ENCODE measurements at regions of chr10 and their contacts with region 1.

Region 1: DNA sequence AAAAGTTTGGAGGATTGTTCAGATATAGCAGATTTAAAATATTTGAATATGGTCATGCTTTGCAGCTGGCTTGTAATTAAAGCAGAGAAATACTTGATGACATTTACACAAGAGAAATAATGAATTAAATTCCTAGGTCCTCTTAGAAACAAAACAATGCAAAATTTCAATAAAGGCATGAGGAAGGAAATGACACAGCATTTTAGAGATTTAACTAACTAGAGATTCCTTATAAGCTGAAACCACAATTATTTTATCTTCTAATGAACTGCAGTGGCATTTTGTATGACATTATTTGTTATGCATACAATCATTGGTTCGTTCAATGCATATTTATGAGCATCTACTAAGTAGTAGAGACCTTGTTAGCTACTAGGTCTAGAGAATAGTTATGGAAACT is 490.9 kb downstream of the ZWINT start:
- DNase-seq: no peak
- ATAC-seq: peak; percentile 22
- H3K4me3 ChIP-seq: no peak overlapping the region
- H3K27ac ChIP-seq: no peak overlapping the region
- H3K4me1 ChIP-seq: no peaks in the 10 kb centered on the region
- H3K27me3 ChIP-seq: no peaks in the 10 kb centered on the region
- CTCF ChIP-seq: no peak

Region 2: GRCh38 chr10:55897490-55897921 is 27.3 kb after region 1 on chr10:
- CTCF ChIA-PET with region 1: no interaction called
- POLR2A ChIA-PET with region 1: no interaction called
- intact Hi-C with region 1: loop called (anchors 2 kb)
- DNase-seq: no peak
- ATAC-seq: no peak
- H3K4me3 ChIP-seq: no peak overlapping the region
- H3K27ac ChIP-seq: no peak overlapping the region
- H3K4me1 ChIP-seq: no peaks in the 10 kb centered on the region
- H3K27me3 ChIP-seq: no peaks in the 10 kb centered on the region
- CTCF ChIP-seq: no peak

Region 3: DNA sequence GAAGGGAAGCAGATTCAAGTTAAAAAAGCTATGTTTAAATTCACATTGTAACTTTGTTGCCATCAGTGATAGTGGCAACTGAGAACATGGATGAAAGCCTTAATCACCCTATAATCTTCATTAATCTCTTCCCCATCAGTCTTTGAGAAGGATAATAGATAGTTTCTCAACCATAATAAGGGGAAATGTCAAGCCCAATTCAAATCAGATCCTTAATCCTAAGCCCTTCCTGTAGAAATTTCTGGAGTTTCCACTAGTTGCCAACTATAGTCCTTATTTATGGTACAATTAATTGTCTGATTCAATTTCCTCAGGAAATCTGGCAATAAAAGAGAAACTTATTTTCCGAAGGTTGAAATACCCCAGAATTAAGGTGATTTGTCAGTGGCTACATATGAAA is 59.1 kb after region 1 on chr10:
- CTCF ChIA-PET with region 1: no interaction called
- POLR2A ChIA-PET with region 1: no interaction called
- intact Hi-C with region 1: loop called (anchors 5 kb)
- DNase-seq: no peak
- ATAC-seq: no peak
- H3K4me3 ChIP-seq: no peak overlapping the region
- H3K27ac ChIP-seq: no peak overlapping the region
- H3K4me1 ChIP-seq: no peaks in the 10 kb centered on the region
- H3K27me3 ChIP-seq: no peaks in the 10 kb centered on the region; the same call in 1 of the 2 replicates
- CTCF ChIP-seq: no peak

Measured in PC-3 (cell line).